Natural killer cell (primary cell): ENCODE measurements at regions of chr17 and their contacts with region 1.

Region 1: DNA sequence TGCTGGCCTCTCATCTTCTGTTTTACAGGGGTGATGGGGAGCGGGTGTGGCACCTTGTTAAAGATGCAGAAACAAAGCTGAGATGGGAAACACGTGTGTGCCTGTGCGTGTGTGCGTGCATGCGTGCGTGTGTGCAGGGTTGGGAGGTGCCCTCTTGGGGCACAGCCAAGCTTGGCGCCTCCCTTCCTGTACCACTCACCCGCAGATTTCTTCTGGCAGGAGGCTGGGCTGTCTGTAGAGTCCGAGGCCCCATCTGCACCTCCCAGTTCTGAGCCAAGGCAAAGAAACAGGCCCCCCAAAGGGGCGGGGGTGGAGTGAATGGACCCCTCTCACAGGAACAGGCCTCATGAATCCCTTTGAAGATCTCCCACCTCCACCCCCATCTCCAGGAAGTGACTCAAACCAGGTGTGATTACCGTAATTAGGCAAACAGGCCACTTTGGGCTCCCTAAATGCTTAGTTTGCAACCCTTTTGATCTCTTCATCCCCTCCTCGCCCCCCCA is 20.9 kb downstream of the TNS4 start:
- DNase-seq: peak; percentile 67 to 95
- ATAC-seq: peak; percentile 84
- H3K4me3 ChIP-seq: no peak overlapping the region
- H3K4me3 Mint-ChIP-seq: peak overlapping the region; percentile 72
- H3K27ac ChIP-seq: peak overlapping the region; percentile 86
- H3K27ac Mint-ChIP-seq: peak overlapping the region; percentile 71 to 83
- H3K4me1 ChIP-seq: peaks cover 71% of the 10 kb centered on the region
- H3K4me1 Mint-ChIP-seq: peaks cover 37 to 64% of the 10 kb centered on the region in 2 donors
- H3K27me3 ChIP-seq: no peaks in the 10 kb centered on the region
- H3K27me3 Mint-ChIP-seq: no peaks in the 10 kb centered on the region
- CTCF ChIP-seq: no peak

Region 2: GRCh38 chr17:40113110-40113906 is 367.2 kb before region 1 on chr17:
- intact Hi-C with region 1: no loop called
- DNase-seq: peak; percentile 86 to 96
- ATAC-seq: peak; percentile 81 to 93 (median 88)
- H3K4me3 ChIP-seq: peak overlapping the region; percentile 46
- H3K4me3 Mint-ChIP-seq: peak overlapping the region; percentile 86
- H3K27ac ChIP-seq: peak overlapping the region; percentile 48
- H3K27ac Mint-ChIP-seq: peak overlapping the region; percentile 98 to 99
- H3K4me1 ChIP-seq: peaks cover 52% of the 10 kb centered on the region
- H3K4me1 Mint-ChIP-seq: peaks cover 46 to 49% of the 10 kb centered on the region in 2 donors
- H3K27me3 ChIP-seq: no peaks in the 10 kb centered on the region
- H3K27me3 Mint-ChIP-seq: no peaks in the 10 kb centered on the region
- CTCF ChIP-seq: peak; percentile 82

Region 3: GRCh38 chr17:40264458-40265185 is 215.9 kb before region 1 on chr17:
- intact Hi-C with region 1: no loop called
- DNase-seq: no peak
- ATAC-seq: no peak
- H3K4me3 ChIP-seq: no peak overlapping the region
- H3K4me3 Mint-ChIP-seq: no peak overlapping the region
- H3K27ac ChIP-seq: no peak overlapping the region
- H3K27ac Mint-ChIP-seq: no peak overlapping the region
- H3K4me1 ChIP-seq: no peaks in the 10 kb centered on the region
- H3K4me1 Mint-ChIP-seq: peaks cover 0 to 6% of the 10 kb centered on the region in 2 donors
- H3K27me3 ChIP-seq: no peaks in the 10 kb centered on the region
- H3K27me3 Mint-ChIP-seq: no peaks in the 10 kb centered on the region
- CTCF ChIP-seq: no peak

Region 4: GRCh38 chr17:40516581-40517285 is 36.2 kb after region 1 on chr17:
- intact Hi-C with region 1: loop called (anchors 1 kb)
- DNase-seq: peak; percentile 60 to 92
- ATAC-seq: peak; percentile 71 to 85 (median 79)
- H3K4me3 ChIP-seq: peak overlapping the region; percentile 30
- H3K4me3 Mint-ChIP-seq: peak overlapping the region; percentile 87
- H3K27ac ChIP-seq: peak overlapping the region; percentile 15
- H3K27ac Mint-ChIP-seq: peak overlapping the region; percentile 70 to 86
- H3K4me1 ChIP-seq: peaks cover 64% of the 10 kb centered on the region
- H3K4me1 Mint-ChIP-seq: peaks cover 63 to 71% of the 10 kb centered on the region in 2 donors
- H3K27me3 ChIP-seq: no peaks in the 10 kb centered on the region
- H3K27me3 Mint-ChIP-seq: peaks cover 0 to 14% of the 10 kb centered on the region in 2 donors
- CTCF ChIP-seq: no peak